Naive thymus-derived CD4-positive, alpha-beta T cell (primary cell): ENCODE measurements at regions of chr6 and their contacts with region 1.

Region 1: GRCh38 chr6:142913511-142914047 is 31.4 kb downstream of the HIVEP2 start:
- DNase-seq: peak; percentile 34 to 83 (median 80)
- ATAC-seq: peak; percentile 93
- H3K4me3 ChIP-seq: peak overlapping the region; percentile 55
- H3K4me3 Mint-ChIP-seq: peak overlapping the region; percentile 71 to 94 (median 87)
- H3K27ac ChIP-seq: peak overlapping the region; percentile 82
- H3K27ac Mint-ChIP-seq: peak overlapping the region in 7 of 9 donors; percentile 95 to 100 (median 99)
- H3K4me1 ChIP-seq: peaks cover 52 to 75% of the 10 kb centered on the region in 2 donors
- H3K4me1 Mint-ChIP-seq: peaks cover 52 to 96% (median 93%) of the 10 kb centered on the region in 7 donors
- H3K27me3 ChIP-seq: no peaks in the 10 kb centered on the region
- H3K27me3 Mint-ChIP-seq: no peaks in the 10 kb centered on the region

Region 2: GRCh38 chr6:142850679-142851423 is 62.7 kb before region 1 on chr6:
- CTCF ChIA-PET with region 1: interaction called, 3 read pairs
- POLR2A ChIA-PET with region 1: interaction called, 11 read pairs
- intact Hi-C with region 1: no loop called
- DNase-seq: peak in 1 of 9 donors; percentile 39
- ATAC-seq: peak; percentile 36
- H3K4me3 ChIP-seq: peak overlapping the region; percentile 32
- H3K4me3 Mint-ChIP-seq: peak overlapping the region; percentile 58 to 78 (median 72)
- H3K27ac ChIP-seq: peak overlapping the region; percentile 66
- H3K27ac Mint-ChIP-seq: peak overlapping the region; percentile 76 to 100 (median 91)
- H3K4me1 ChIP-seq: peaks cover 94 to 95% of the 10 kb centered on the region in 2 donors
- H3K4me1 Mint-ChIP-seq: peaks cover 47 to 100% (median 97%) of the 10 kb centered on the region in 7 donors
- H3K27me3 ChIP-seq: no peaks in the 10 kb centered on the region
- H3K27me3 Mint-ChIP-seq: no peaks in the 10 kb centered on the region

Region 3: DNA sequence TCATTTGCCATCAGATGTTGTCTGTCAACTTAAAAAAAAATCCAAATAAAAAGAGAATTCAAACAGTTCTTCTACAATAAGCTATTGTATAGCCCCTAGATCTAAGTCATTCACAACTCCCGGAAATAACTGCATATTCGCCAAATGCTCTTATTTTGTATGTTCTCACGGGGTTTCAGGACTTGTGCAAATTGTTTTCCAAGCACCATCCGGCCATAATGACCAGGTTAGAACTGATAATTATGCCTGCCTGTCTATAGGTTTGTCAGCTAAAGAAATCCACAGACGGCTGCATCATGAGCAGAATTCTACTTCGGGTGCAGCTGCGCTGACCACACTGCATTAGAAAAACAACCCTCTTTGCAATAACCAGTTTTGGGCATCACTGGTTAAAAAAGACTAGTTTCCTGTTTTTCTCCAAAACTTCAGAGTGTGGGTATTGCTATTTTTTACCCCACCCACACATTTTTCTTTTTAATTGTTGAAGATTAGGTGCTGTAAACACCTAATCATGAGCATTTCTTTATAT is 56.3 kb before region 1 on chr6:
- CTCF ChIA-PET with region 1: no interaction called
- POLR2A ChIA-PET with region 1: interaction called, 11 read pairs
- intact Hi-C with region 1: loop called in 1 of 2 experiments (anchors 1 kb)
- DNase-seq: peak in 7 of 9 donors; percentile 54 to 77 (median 68)
- ATAC-seq: peak; percentile 59
- H3K4me3 ChIP-seq: peak overlapping the region; percentile 54
- H3K4me3 Mint-ChIP-seq: peak overlapping the region; percentile 72 to 88 (median 84)
- H3K27ac ChIP-seq: peak overlapping the region; percentile 86
- H3K27ac Mint-ChIP-seq: peak overlapping the region; percentile 91 to 100 (median 98)
- H3K4me1 ChIP-seq: peaks cover 62 to 81% of the 10 kb centered on the region in 2 donors
- H3K4me1 Mint-ChIP-seq: peaks cover 54 to 98% (median 93%) of the 10 kb centered on the region in 7 donors
- H3K27me3 ChIP-seq: no peaks in the 10 kb centered on the region
- H3K27me3 Mint-ChIP-seq: no peaks in the 10 kb centered on the region

Region 4: DNA sequence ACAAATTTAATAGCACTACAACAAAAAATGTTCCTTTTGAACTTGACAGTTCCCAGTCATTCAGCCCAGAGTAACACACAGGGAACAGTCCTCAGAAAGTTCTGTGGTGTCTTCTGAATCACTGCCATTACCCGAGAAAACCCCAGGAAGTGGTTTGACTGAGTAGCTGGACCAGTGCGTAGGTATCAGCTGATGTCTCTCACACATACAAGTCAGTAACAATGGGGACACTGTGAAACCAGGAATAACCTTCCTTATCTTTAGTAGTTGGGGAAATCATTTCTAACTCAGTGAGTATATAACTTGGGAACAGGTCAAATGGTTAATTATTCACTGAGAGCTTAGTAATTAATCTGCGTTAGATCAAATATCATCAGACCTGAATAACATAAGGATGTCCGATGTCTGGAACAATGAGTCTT is 41.7 kb before region 1 on chr6:
- CTCF ChIA-PET with region 1: no interaction called
- POLR2A ChIA-PET with region 1: no interaction called
- intact Hi-C with region 1: loop called in 1 of 2 experiments (anchors 5 kb)
- DNase-seq: peak in 8 of 9 donors; percentile 40 to 74 (median 58)
- ATAC-seq: peak; percentile 90
- H3K4me3 ChIP-seq: no peak overlapping the region
- H3K4me3 Mint-ChIP-seq: peak overlapping the region; percentile 34 to 70 (median 52)
- H3K27ac ChIP-seq: peak overlapping the region; percentile 61
- H3K27ac Mint-ChIP-seq: peak overlapping the region; percentile 73 to 95 (median 91)
- H3K4me1 ChIP-seq: peaks cover 32 to 64% of the 10 kb centered on the region in 2 donors
- H3K4me1 Mint-ChIP-seq: peaks cover 59 to 97% (median 93%) of the 10 kb centered on the region in 7 donors
- H3K27me3 ChIP-seq: no peaks in the 10 kb centered on the region
- H3K27me3 Mint-ChIP-seq: no peaks in the 10 kb centered on the region

Region 5: GRCh38 chr6:142902636-142903053 is 10.9 kb before region 1 on chr6:
- CTCF ChIA-PET with region 1: interaction called, 8 read pairs
- POLR2A ChIA-PET with region 1: interaction called, 53 read pairs
- intact Hi-C with region 1: loop called (anchors 1 kb)
- DNase-seq: peak; percentile 60 to 89 (median 84)
- ATAC-seq: peak; percentile 84
- H3K4me3 ChIP-seq: peak overlapping the region; percentile 26
- H3K4me3 Mint-ChIP-seq: peak overlapping the region in 7 of 10 donors; percentile 77 to 88 (median 83)
- H3K27ac ChIP-seq: peak overlapping the region; percentile 88
- H3K27ac Mint-ChIP-seq: peak overlapping the region in 1 of 9 donors; percentile 95
- H3K4me1 ChIP-seq: peaks cover 48 to 71% of the 10 kb centered on the region in 2 donors
- H3K4me1 Mint-ChIP-seq: peaks cover 13 to 64% (median 41%) of the 10 kb centered on the region in 7 donors
- H3K27me3 ChIP-seq: no peaks in the 10 kb centered on the region
- H3K27me3 Mint-ChIP-seq: no peaks in the 10 kb centered on the region

Region 6: DNA sequence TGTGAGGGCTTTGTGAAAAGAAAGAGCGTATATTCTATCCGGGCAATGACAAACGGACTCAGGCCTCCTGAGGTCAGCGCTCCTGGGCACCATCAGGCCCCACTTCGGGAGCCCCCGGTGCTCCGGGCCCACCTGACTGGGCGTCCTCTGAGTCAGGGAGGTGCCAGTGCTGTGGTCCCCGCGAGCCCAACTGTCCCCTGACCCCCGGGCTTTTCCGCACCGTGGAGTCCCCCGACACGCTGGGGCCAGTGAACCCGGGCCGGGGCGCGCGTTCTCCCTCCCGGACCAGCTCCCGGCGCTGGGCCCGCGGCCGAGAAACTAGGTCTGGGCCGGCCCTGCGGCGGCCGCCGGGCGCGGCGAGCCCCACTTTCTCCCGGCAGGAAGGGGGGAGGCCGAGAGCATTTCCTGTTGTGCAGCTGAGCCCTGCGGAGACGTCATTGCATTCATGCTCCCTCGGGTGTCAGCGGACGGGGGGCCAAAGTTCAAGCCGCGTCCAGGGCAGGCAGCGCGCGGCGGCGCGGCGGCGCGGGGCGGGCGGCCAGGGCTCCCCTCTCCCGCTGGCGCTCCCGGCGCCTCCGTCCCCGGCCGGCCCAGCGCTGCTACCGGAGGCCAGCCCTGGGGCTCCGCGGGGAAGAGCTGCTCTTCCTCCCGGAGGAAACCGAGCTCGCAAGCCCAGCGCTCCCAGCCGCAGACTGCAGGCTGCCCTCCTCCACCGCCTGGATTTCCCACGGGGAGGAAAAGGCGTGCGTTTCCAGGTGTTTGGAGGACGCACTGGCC is 13.1 kb after region 1 on chr6:
- CTCF ChIA-PET with region 1: interaction called, 4 read pairs
- POLR2A ChIA-PET with region 1: interaction called, 75 read pairs
- intact Hi-C with region 1: loop called (anchors 1 kb)
- DNase-seq: peak; percentile 62 to 87 (median 84)
- ATAC-seq: peak; percentile 88
- H3K4me3 ChIP-seq: peak overlapping the region; percentile 87
- H3K4me3 Mint-ChIP-seq: peak overlapping the region; percentile 88 to 99 (median 96)
- H3K27ac ChIP-seq: peak overlapping the region; percentile 100
- H3K27ac Mint-ChIP-seq: peak overlapping the region; percentile 93 to 100 (median 100)
- H3K4me1 ChIP-seq: peaks cover 35 to 40% of the 10 kb centered on the region in 2 donors
- H3K4me1 Mint-ChIP-seq: peaks cover 20 to 75% (median 68%) of the 10 kb centered on the region in 7 donors
- H3K27me3 ChIP-seq: no peaks in the 10 kb centered on the region
- H3K27me3 Mint-ChIP-seq: no peaks in the 10 kb centered on the region